Caco-2 (cell line): ENCODE measurements at regions of chr2 and their contacts with region 1.

Region 1: DNA sequence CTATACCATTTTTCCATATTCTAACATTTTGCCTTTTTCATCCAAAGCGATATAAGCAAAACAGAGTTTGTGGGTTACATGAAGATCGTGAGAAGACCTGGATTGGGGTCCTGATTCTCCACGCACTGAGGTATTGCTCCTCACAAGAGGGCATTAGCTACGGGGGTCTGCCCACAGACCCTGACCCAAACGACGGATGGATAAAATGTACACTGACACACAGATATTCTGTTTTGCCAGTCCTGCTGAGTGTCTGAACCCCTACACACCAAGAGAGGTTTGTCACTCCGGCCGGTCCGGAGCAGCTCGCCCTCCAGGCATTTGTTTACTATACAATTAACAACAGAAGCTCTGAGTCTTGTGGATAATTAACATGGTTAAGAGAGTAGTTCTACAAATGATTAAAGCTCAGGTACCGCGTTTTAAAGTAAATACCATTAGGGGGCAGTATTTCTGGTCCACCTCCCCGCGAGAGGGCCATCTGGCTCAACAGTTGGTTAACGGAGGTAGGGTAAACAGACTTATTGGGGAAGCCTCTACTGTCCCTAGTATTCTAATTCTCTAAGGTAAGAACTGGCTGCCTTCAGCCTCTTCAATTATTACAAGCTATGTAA is 28.4 kb downstream of the SCYGR8 start:
- DNase-seq: no peak
- H3K4me3 ChIP-seq: no peak overlapping the region
- H3K4me3 Mint-ChIP-seq: no peak overlapping the region
- H3K27ac Mint-ChIP-seq: no peak overlapping the region
- H3K4me1 ChIP-seq: no peaks in the 10 kb centered on the region
- H3K4me1 Mint-ChIP-seq: no peaks in the 10 kb centered on the region
- H3K27me3 ChIP-seq: no peaks in the 10 kb centered on the region
- H3K27me3 Mint-ChIP-seq: no peaks in the 10 kb centered on the region
- CTCF ChIP-seq: no peak

Region 2: DNA sequence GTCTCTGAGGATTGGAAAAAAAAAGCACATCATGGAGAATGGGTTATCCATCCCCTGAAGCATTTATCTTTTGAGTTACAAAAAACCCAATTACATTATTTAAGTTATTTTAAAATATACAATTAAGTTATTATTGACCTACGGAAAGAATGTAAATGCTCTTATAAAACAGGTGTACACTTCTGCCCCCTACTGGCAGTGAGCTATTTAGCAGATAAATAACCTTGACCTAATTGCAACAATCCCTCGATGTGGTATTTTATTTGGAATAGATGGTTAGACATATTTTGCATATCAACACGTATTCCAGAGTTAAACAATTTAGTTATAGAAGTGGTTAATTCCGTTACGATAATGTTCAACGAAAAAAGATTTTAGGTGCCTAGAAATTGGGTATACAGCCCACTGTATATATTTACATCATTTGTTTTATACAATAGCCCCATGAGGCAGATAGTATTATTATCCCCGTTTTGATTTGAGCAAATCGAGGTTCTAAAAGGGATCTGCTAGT is 88.2 kb after region 1 on chr2:
- CTCF ChIA-PET with region 1: interaction called, 4 read pairs
- POLR2A ChIA-PET with region 1: no interaction called
- intact Hi-C with region 1: loop called (anchors 2 kb)
- DNase-seq: peak in 1 of 2 experiments; percentile 23
- H3K4me3 ChIP-seq: no peak overlapping the region
- H3K4me3 Mint-ChIP-seq: no peak overlapping the region
- H3K27ac Mint-ChIP-seq: no peak overlapping the region
- H3K4me1 ChIP-seq: peaks cover 16% of the 10 kb centered on the region
- H3K4me1 Mint-ChIP-seq: peaks cover 19% of the 10 kb centered on the region
- H3K27me3 ChIP-seq: no peaks in the 10 kb centered on the region
- H3K27me3 Mint-ChIP-seq: no peaks in the 10 kb centered on the region
- CTCF ChIP-seq: peak; percentile 30 to 47